ENCODE measurements at regions of chr14 and their contacts with region 1.

Region 1: DNA sequence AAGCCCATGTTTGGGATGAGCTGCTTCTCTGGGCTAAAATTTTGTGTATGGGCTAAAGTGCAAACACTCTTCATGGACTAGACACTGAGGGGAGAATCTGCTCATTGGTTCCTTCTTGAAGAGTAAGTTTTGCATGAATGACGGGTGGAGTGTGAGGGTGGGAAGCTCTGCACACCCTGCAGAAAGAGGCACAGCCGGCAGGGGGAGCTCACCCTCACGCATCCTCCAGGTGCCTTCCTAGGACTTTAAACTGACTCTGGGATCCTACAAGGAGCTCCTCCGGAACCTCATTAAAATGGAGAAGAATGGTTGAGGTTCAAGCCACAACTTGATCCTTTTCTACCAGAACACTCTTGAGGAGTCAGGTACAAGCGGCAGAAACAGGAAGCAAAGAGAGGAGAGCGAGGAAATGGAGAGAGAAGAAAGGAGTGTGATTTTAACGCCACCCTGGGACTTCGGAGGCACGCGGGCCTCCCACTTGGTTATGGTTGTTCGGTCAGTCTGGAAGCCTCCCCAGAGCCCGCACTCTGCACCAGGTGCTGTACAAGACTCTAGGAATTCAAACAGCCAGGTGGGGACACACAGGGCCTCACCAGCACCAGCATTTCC is 87.5 kb downstream of the SETD3 start:
- DNase-seq: peak; percentile 38 to 79
- H3K4me3 ChIP-seq: no peak overlapping the region
- H3K27ac ChIP-seq: no peak overlapping the region
- H3K4me1 ChIP-seq: peaks cover 0 to 16% (median 3%) of the 10 kb centered on the region in 4 experiments; a peak in 4 of 7 replicates
- H3K27me3 ChIP-seq: no peaks in the 10 kb centered on the region
- CTCF ChIP-seq: peak; percentile 78 to 97 (median 96)
- EP300 ChIP-seq: no peak
- POLR2A ChIP-seq: no peak
- RAD21 ChIP-seq: peak; percentile 67 to 71

Region 2: DNA sequence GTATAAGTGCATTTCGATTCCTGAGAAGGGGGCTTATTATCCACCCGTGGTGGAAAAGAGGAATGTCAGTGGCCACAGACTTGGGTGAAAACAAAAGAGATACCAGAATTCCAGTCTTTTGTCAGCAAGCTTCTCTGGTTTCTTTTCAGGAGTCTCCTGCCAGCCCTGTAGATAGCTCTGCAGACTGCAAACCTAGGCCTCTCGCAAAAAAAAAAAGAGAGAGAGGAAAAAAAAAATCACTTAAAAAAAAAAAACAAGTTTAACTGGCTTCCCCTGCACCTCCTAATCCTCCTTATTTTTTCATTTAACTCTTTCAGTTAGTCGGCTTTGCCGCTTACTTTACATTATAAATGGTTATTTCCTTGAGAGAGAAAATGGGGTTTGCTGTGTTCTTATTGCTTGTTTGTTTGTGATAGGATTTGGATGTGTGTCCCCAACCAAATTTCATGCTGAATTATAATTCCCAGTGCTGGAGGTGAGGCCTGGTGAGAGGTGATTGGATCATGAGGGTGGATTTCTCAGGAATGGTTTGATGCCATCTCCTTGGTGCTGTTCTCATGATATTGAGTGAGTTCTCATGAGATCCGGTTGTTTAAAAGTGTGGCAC is 291.2 kb before region 1 on chr14:
- CTCF ChIA-PET with region 1: no interaction called
- POLR2A ChIA-PET with region 1: no interaction called
- DNase-seq: no peak
- H3K4me3 ChIP-seq: no peak overlapping the region
- H3K27ac ChIP-seq: peak overlapping the region; percentile 60; the same call in 1 of the 2 replicates
- H3K4me1 ChIP-seq: peaks cover 0 to 11% (median 7%) of the 10 kb centered on the region in 4 experiments; a peak in 4 of 7 replicates
- H3K27me3 ChIP-seq: no peaks in the 10 kb centered on the region
- CTCF ChIP-seq: no peak
- EP300 ChIP-seq: no peak
- POLR2A ChIP-seq: no peak
- RAD21 ChIP-seq: no peak

Region 3: GRCh38 chr14:99207496-99207895 is 185.7 kb before region 1 on chr14:
- CTCF ChIA-PET with region 1: no interaction called
- POLR2A ChIA-PET with region 1: no interaction called
- DNase-seq: no peak
- H3K4me3 ChIP-seq: no peak overlapping the region
- H3K27ac ChIP-seq: no peak overlapping the region
- H3K4me1 ChIP-seq: peaks cover 0 to 13% (median under 1%) of the 10 kb centered on the region in 4 experiments; a peak in 2 of 7 replicates
- H3K27me3 ChIP-seq: no peaks in the 10 kb centered on the region
- CTCF ChIP-seq: no peak
- EP300 ChIP-seq: no peak
- POLR2A ChIP-seq: no peak
- RAD21 ChIP-seq: no peak

Region 4: GRCh38 chr14:99320105-99320572 is 73.0 kb before region 1 on chr14:
- CTCF ChIA-PET with region 1: interaction called, 20 read pairs
- POLR2A ChIA-PET with region 1: no interaction called
- DNase-seq: peak in 1 of 2 experiments; percentile 96
- H3K4me3 ChIP-seq: no peak overlapping the region
- H3K27ac ChIP-seq: no peak overlapping the region
- H3K4me1 ChIP-seq: peaks cover 0 to 14% (median 6%) of the 10 kb centered on the region in 4 experiments; a peak in 6 of 7 replicates
- H3K27me3 ChIP-seq: no peaks in the 10 kb centered on the region; a peak in 1 of 7 replicates
- CTCF ChIP-seq: peak; percentile 90 to 100 (median 94)
- EP300 ChIP-seq: no peak
- POLR2A ChIP-seq: no peak
- RAD21 ChIP-seq: peak; percentile 67 to 78

Region 5: GRCh38 chr14:99342204-99342603 is 50.9 kb before region 1 on chr14:
- CTCF ChIA-PET with region 1: interaction called, 17 read pairs
- POLR2A ChIA-PET with region 1: no interaction called
- DNase-seq: no peak
- H3K4me3 ChIP-seq: no peak overlapping the region
- H3K27ac ChIP-seq: no peak overlapping the region
- H3K4me1 ChIP-seq: no peaks in the 10 kb centered on the region
- H3K27me3 ChIP-seq: no peaks in the 10 kb centered on the region
- CTCF ChIP-seq: no peak
- EP300 ChIP-seq: no peak
- POLR2A ChIP-seq: no peak
- RAD21 ChIP-seq: no peak

Region 6: GRCh38 chr14:99360774-99361595 is 32.2 kb before region 1 on chr14:
- CTCF ChIA-PET with region 1: interaction called, 26 read pairs
- POLR2A ChIA-PET with region 1: no interaction called
- DNase-seq: no peak
- H3K4me3 ChIP-seq: no peak overlapping the region
- H3K27ac ChIP-seq: no peak overlapping the region
- H3K4me1 ChIP-seq: peaks cover 0 to 6% (median 2%) of the 10 kb centered on the region in 4 experiments; a peak in 4 of 7 replicates
- H3K27me3 ChIP-seq: no peaks in the 10 kb centered on the region; a peak in 1 of 7 replicates
- CTCF ChIP-seq: no peak
- EP300 ChIP-seq: no peak
- POLR2A ChIP-seq: no peak
- RAD21 ChIP-seq: no peak

Region 7: GRCh38 chr14:99415496-99416281 is 22.5 kb after region 1 on chr14:
- CTCF ChIA-PET with region 1: interaction called, 447 read pairs
- POLR2A ChIA-PET with region 1: interaction called, 9 read pairs
- DNase-seq: no peak
- H3K4me3 ChIP-seq: no peak overlapping the region
- H3K27ac ChIP-seq: no peak overlapping the region
- H3K4me1 ChIP-seq: peaks cover 6 to 31% (median 18%) of the 10 kb centered on the region in 4 experiments
- H3K27me3 ChIP-seq: no peaks in the 10 kb centered on the region
- CTCF ChIP-seq: peak in 2 of 3 experiments; percentile 82 to 83; a peak in 3 of 4 replicates
- EP300 ChIP-seq: no peak
- POLR2A ChIP-seq: no peak
- RAD21 ChIP-seq: peak; percentile 95 to 97

Region 8: GRCh38 chr14:99447739-99448138 is 54.6 kb after region 1 on chr14:
- CTCF ChIA-PET with region 1: no interaction called
- POLR2A ChIA-PET with region 1: no interaction called
- DNase-seq: no peak
- H3K4me3 ChIP-seq: no peak overlapping the region
- H3K27ac ChIP-seq: no peak overlapping the region
- H3K4me1 ChIP-seq: no peaks in the 10 kb centered on the region
- H3K27me3 ChIP-seq: no peaks in the 10 kb centered on the region
- CTCF ChIP-seq: no peak
- EP300 ChIP-seq: no peak
- POLR2A ChIP-seq: no peak
- RAD21 ChIP-seq: no peak

Region 9: GRCh38 chr14:100025111-100025510 is 632.0 kb after region 1 on chr14:
- CTCF ChIA-PET with region 1: no interaction called
- POLR2A ChIA-PET with region 1: no interaction called
- DNase-seq: peak in 1 of 2 experiments; percentile 29
- H3K4me3 ChIP-seq: no peak overlapping the region
- H3K27ac ChIP-seq: no peak overlapping the region
- H3K4me1 ChIP-seq: no peaks in the 10 kb centered on the region
- H3K27me3 ChIP-seq: peaks cover 0 to 2% (median 0%) of the 10 kb centered on the region in 4 experiments; a peak in 2 of 7 replicates
- CTCF ChIP-seq: peak; percentile 68 to 80 (median 73)
- EP300 ChIP-seq: no peak
- POLR2A ChIP-seq: no peak
- RAD21 ChIP-seq: peak; percentile 70 to 79